Activated CD4-positive, alpha-beta memory T cell treated with anti-CD3 and anti-CD28 coated beads for 36 hours (primary cell): ENCODE measurements at regions of chr10 and their contacts with region 1.

Region 1: GRCh38 chr10:24617771-24618391 is 105.8 kb downstream of the ARHGAP21 start:
- DNase-seq: peak; percentile 63
- H3K4me3 Mint-ChIP-seq: no peak overlapping the region
- H3K27ac Mint-ChIP-seq: no peak overlapping the region
- H3K4me1 Mint-ChIP-seq: peaks cover 25% of the 10 kb centered on the region
- H3K27me3 Mint-ChIP-seq: no peaks in the 10 kb centered on the region

Region 2: GRCh38 chr10:24589265-24589664 is 28.6 kb before region 1 on chr10:
- CTCF ChIA-PET with region 1: interaction called, 10 read pairs
- POLR2A ChIA-PET with region 1: no interaction called
- intact Hi-C with region 1: no loop called
- DNase-seq: no peak
- H3K4me3 Mint-ChIP-seq: no peak overlapping the region
- H3K27ac Mint-ChIP-seq: no peak overlapping the region
- H3K4me1 Mint-ChIP-seq: peaks cover 5% of the 10 kb centered on the region
- H3K27me3 Mint-ChIP-seq: no peaks in the 10 kb centered on the region

Region 3: DNA sequence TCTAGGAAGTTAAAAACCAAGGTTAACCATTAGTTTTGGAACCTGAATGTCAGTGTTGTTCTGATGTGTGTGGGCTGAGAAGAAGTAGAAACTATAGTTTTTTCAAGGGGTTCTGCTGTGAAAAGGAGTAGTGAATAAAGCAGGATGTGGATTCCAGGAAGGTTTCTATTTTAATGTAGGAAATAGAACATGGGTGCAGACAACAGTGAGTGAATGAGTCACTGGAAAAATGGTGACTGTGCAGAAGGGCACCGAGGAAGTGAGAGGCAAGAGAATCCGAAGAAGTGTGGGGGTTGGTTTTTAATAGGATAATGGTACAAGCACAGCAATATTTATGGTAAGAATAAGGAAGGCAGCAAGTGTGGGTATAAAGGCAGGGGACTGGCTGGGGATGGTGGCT is 14.5 kb before region 1 on chr10:
- CTCF ChIA-PET with region 1: interaction called, 10 read pairs
- POLR2A ChIA-PET with region 1: no interaction called
- intact Hi-C with region 1: no loop called
- DNase-seq: peak; percentile 43
- H3K4me3 Mint-ChIP-seq: no peak overlapping the region
- H3K27ac Mint-ChIP-seq: peak overlapping the region; percentile 72
- H3K4me1 Mint-ChIP-seq: peaks cover 15% of the 10 kb centered on the region
- H3K27me3 Mint-ChIP-seq: no peaks in the 10 kb centered on the region

Region 4: DNA sequence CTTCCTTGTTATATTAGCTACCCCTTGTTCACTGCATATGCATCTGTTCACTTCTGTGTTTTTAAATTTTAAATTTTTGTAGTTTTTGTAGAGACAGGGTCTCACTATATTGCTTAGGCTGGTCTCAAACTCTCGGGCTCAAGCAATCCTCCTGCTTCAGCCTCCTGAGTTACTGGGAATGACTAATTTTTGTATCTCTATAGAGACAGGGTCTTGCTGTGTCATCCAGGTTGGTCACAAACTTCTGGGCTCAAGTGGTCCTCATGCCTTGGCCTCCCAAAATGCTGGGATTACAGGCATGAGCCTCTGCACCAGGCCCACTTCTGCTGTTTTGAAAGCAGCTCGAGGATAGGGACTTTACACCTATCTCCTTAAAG is 270.0 kb after region 1 on chr10:
- CTCF ChIA-PET with region 1: interaction called, 4 read pairs
- POLR2A ChIA-PET with region 1: no interaction called
- intact Hi-C with region 1: loop called (anchors 5 kb)
- DNase-seq: no peak
- H3K4me3 Mint-ChIP-seq: no peak overlapping the region
- H3K27ac Mint-ChIP-seq: peak overlapping the region; percentile 76
- H3K4me1 Mint-ChIP-seq: peaks cover 35% of the 10 kb centered on the region
- H3K27me3 Mint-ChIP-seq: no peaks in the 10 kb centered on the region

Region 5: DNA sequence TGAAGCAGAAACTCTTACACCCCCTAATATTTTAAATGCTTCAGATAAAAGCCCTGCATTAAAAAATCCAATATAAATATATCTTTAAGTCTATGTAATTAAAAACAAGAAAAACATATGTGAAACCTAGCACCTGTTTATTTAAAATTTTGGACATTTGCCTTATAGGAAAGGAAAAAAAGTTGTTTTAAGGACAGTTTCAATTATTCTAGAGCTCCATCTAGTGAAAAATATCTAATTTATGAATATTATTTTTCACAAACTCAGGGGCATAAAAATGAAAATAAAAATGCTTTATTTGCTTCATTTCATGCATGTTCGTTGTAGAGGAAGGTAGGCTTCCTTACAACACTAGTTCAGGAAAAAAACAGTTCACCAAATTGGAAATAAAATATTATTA is 372.0 kb after region 1 on chr10:
- CTCF ChIA-PET with region 1: interaction called, 21 read pairs
- POLR2A ChIA-PET with region 1: no interaction called
- intact Hi-C with region 1: no loop called
- DNase-seq: no peak
- H3K4me3 Mint-ChIP-seq: no peak overlapping the region
- H3K27ac Mint-ChIP-seq: no peak overlapping the region
- H3K4me1 Mint-ChIP-seq: no peaks in the 10 kb centered on the region
- H3K27me3 Mint-ChIP-seq: peaks cover 4% of the 10 kb centered on the region

Region 6: DNA sequence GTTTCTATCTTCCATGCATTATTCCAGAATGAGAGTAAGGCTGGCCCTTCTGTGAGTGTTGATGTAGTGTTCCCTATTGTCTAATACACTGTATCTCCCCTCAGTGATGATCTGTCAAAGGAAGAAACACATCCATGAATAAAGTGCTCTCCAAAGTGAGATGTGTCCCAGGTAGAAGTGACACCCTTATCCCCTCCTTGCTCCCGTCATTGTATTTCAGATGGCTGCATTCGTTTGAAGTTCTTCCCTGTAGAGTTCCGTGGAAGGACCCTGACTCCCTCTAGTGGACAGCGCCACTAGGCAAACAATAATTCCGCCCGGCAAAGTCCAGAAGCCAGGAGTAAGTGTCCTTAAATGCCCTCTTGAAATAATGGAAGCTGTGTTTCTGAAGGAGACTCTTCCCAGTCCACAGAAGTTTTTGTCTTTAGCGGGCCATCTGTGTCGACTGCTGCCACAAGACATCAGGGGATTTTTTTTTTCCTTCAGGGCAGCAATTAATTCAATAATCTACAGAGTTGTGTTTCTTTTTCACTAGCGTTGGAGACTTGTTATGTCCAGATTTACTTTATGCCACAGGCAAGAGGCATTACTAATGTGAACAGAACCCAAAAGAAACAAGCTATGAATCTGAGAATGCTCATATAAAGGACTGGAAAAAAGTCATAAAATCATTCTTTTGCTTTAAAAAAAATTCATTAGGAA is 463.1 kb after region 1 on chr10:
- CTCF ChIA-PET with region 1: interaction called, 35 read pairs
- POLR2A ChIA-PET with region 1: no interaction called
- intact Hi-C with region 1: loop called (anchors 5 kb)
- DNase-seq: peak; percentile 72
- H3K4me3 Mint-ChIP-seq: no peak overlapping the region
- H3K27ac Mint-ChIP-seq: no peak overlapping the region
- H3K4me1 Mint-ChIP-seq: peaks cover 9% of the 10 kb centered on the region
- H3K27me3 Mint-ChIP-seq: peaks cover 5% of the 10 kb centered on the region